ENCODE measurements at regions of chr6 and their contacts with region 1.

Region 1: DNA sequence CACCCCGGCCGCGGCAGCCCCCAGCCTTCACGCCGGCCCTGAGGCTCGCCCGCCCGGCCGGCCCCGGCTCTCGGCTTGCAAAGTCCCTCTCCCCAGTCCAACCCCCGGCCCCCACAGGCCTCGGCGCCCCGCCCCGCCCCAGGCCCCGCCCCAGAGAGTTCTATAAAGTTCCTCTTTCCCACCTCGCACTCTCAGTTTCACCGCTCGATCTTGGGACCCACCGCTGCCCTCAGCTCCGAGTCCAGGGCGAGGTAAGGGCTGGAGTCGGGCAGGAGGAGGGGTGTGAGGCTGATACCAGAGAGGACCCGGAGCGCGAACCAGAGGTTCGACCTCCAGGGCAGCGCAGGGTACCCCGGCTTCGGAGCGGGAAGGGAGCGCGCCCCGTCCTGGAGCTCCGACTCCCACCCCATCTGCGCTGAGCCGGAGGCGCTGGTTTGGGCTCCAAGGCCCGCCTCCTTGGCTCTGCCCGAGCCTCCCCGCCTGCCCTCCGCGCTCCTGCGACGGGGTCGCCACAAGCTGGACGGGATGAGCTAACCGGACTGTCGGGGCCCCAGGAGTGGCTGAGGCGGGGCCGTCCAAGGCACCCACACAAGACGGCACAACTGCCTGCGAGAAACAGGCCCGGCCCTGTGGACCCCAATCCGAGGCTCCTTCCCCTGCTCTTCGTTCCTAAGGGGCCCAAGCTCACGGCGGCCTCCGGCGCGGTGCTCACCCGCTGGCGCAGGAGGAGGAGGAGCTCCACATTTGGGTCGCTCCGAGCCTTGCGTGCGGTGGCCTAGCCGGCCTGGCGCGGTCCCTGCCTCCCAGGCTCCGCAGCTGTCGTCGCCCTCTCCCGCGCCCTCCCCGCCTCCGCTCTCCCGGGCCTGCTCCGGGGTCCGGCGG is at the start of gene IRF4:
- DNase-seq: peak; percentile 77
- ATAC-seq: peak; percentile 55
- H3K4me3 Mint-ChIP-seq: peak within 1 kb of the TSS; percentile 86
- H3K27ac Mint-ChIP-seq: peak within 1 kb of the TSS; percentile 94
- H3K4me1 Mint-ChIP-seq: peaks cover 51% of the 10 kb centered on the region
- H3K27me3 Mint-ChIP-seq: no peaks in the 10 kb centered on the region
- total RNA-seq, gene IRF4: 91.2 to 95.2 TPM

Region 2: GRCh38 chr6:227074-227782 is 164.6 kb before region 1 on chr6:
- CTCF ChIA-PET with region 1: interaction called, 4 read pairs
- POLR2A ChIA-PET with region 1: interaction called, 38 read pairs
- DNase-seq: no peak
- ATAC-seq: no peak
- H3K4me3 Mint-ChIP-seq: no peak overlapping the region
- H3K27ac Mint-ChIP-seq: peak overlapping the region; percentile 95
- H3K4me1 Mint-ChIP-seq: peaks cover 72% of the 10 kb centered on the region
- H3K27me3 Mint-ChIP-seq: no peaks in the 10 kb centered on the region

Region 3: DNA sequence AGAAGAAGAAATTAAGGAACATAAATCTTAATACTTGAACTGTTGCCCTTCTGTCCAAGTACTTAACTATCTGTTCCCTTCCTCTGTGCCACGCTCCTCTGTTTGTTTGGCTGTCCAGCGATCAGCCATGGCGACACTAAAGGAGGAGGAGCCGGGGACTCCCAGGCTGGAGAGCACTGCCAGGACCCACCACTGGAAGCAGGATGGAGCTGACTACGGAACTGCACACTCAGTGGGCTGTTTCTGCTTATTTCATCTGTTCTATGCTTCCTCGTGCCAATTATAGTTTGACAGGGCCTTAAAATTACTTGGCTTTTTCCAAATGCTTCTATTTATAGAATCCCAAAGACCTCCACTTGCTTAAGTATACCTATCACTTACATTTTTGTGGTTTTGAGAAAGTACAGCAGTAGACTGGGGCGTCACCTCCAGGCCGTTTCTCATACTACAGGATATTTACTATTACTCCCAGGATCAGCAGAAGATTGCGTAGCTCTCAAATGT is 16.9 kb after region 1 on chr6:
- CTCF ChIA-PET with region 1: interaction called, 71 read pairs
- POLR2A ChIA-PET with region 1: interaction called, 231 read pairs
- DNase-seq: no peak
- ATAC-seq: no peak
- H3K4me3 Mint-ChIP-seq: no peak overlapping the region
- H3K27ac Mint-ChIP-seq: peak overlapping the region; percentile 58
- H3K4me1 Mint-ChIP-seq: peaks cover 58% of the 10 kb centered on the region
- H3K27me3 Mint-ChIP-seq: no peaks in the 10 kb centered on the region

Region 4: DNA sequence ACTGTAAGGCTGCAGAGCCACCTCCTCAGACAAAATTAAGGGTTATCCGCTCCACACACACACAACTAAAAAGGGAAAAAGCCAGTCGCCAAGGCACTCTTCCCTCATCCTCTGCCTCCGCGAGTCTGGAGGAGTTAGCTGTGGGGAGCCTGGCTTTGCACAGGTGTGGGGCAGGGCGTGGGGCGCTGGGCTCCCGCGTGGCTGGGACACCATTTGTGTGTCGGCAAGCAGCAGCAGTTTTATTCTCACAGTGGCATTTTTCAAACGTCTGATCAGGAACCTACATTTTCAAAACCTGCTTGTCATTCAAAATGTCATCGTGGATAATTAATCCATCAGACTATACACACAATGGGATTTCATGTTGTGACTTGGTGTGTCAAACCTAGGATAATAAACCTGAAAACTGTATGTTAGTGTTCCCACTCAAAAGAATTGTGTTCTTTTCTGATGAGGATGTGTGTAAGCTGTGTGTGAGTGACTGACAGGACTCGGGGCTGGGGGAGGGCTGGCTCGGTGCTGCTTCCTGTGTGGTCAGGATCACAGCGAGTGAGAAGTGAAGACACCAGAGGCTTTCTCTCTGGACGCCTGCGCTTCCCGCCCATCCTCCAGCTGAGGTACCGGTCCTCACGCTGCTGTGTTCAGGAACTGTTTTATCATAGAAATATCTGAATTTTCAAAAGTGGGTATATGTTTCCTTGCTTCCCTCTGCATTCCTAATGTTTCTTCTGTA is 82.8 kb after region 1 on chr6:
- CTCF ChIA-PET with region 1: interaction called, 5 read pairs
- POLR2A ChIA-PET with region 1: interaction called, 33 read pairs
- DNase-seq: peak; percentile 93
- ATAC-seq: peak; percentile 100
- H3K4me3 Mint-ChIP-seq: peak overlapping the region; percentile 62
- H3K27ac Mint-ChIP-seq: peak overlapping the region; percentile 96
- H3K4me1 Mint-ChIP-seq: peaks cover 64% of the 10 kb centered on the region
- H3K27me3 Mint-ChIP-seq: no peaks in the 10 kb centered on the region

Region 5: GRCh38 chr6:511488-512137 is 119.8 kb after region 1 on chr6:
- CTCF ChIA-PET with region 1: interaction called, 4 read pairs
- POLR2A ChIA-PET with region 1: interaction called, 10 read pairs
- DNase-seq: no peak
- ATAC-seq: no peak
- H3K4me3 Mint-ChIP-seq: no peak overlapping the region
- H3K27ac Mint-ChIP-seq: peak overlapping the region; percentile 55
- H3K4me1 Mint-ChIP-seq: peaks cover 80% of the 10 kb centered on the region
- H3K27me3 Mint-ChIP-seq: no peaks in the 10 kb centered on the region